Right cardiac atrium (tissue), 5 donors: ENCODE measurements at regions of chr4 and their contacts with region 1.

Region 1: DNA sequence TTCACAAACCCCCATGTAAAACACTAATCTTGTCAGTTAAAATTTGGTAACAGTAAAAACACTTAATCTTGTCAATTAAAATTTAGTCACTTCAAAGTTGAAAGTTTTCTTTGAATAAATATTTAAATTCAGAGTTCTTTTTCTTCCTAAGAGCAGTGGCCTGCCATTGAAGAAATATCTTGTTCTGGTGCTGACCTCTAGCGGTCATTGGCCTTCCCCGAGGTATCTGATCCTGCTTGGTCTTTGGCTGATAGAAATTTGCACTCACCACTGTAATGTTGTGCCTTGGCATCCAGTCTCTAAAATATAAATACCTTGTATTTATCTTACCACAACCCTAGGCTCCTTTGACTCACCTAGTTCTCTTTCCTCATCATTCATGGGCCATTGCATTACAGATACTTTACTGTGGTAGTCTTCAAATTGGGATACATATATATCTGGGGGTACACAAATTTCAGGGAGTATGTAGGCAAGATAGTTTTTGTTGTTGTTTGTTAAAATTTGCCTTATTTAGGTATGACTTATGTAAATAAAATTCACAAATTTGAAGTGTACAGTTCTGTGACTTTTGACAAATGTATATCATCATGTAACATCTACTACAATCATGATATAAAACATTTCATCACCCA is 6.7 kb upstream of the ART3 start:
- DNase-seq: peak; percentile 65 to 88 (median 71)
- ATAC-seq: peak; percentile 80 to 85
- H3K4me3 ChIP-seq: no peak overlapping the region
- H3K27ac ChIP-seq: no peak overlapping the region
- H3K4me1 ChIP-seq: no peaks in the 10 kb centered on the region
- H3K27me3 ChIP-seq: no peaks in the 10 kb centered on the region

Region 2: DNA sequence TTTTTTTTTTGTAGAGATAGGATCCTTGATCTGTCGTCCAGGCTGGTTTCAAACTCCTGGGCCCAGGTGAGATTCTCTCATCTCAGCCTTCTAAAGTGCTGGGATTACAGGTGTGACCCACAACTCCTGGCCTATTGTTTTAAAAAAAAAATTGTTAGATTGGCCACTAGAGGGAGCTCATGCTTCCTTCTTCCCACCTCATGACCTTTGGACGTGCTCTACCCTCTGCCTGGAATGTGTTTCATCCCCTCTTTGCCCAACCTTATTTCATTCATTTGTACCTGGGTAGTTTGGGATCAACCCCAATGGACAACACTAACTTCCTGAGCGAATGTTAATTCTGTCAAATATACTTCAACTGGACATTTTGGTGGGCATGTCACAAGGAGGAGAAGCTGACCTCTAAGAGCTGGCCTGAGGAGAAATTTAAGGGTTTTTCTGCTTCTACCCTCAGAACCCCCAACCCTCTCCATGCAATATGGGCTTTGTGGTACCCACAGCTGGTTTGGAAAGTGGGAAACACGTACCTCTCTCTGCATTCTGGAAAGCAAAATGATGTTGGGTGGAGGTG is 171.9 kb before region 1 on chr4:
- intact Hi-C with region 1: loop called in 1 of 4 experiments (anchors 10 kb)
- DNase-seq: no peak
- ATAC-seq: peak in 1 of 2 donors; percentile 20
- H3K4me3 ChIP-seq: no peak overlapping the region
- H3K27ac ChIP-seq: no peak overlapping the region
- H3K4me1 ChIP-seq: no peaks in the 10 kb centered on the region
- H3K27me3 ChIP-seq: no peaks in the 10 kb centered on the region

Region 3: GRCh38 chr4:75995727-75996126 is 72.0 kb before region 1 on chr4:
- intact Hi-C with region 1: loop called (anchors 2 to 5 kb)
- DNase-seq: no peak
- ATAC-seq: no peak
- H3K4me3 ChIP-seq: no peak overlapping the region
- H3K27ac ChIP-seq: no peak overlapping the region
- H3K4me1 ChIP-seq: no peaks in the 10 kb centered on the region
- H3K27me3 ChIP-seq: no peaks in the 10 kb centered on the region